PC-9 (cell line): ENCODE measurements at regions of chr6 and their contacts with region 1.

Region 1: GRCh38 chr6:11036977-11037430 is 7.1 kb downstream of the ELOVL2 start:
- DNase-seq: no peak
- H3K4me3 ChIP-seq: no peak overlapping the region
- H3K27ac ChIP-seq: no peak overlapping the region
- H3K4me1 ChIP-seq: no peaks in the 10 kb centered on the region
- H3K27me3 ChIP-seq: no peaks in the 10 kb centered on the region
- CTCF ChIP-seq: no peak

Region 2: GRCh38 chr6:11050731-11051130 is 13.7 kb after region 1 on chr6:
- CTCF ChIA-PET with region 1: no interaction called
- POLR2A ChIA-PET with region 1: interaction called, 11 read pairs
- intact Hi-C with region 1: no loop called
- DNase-seq: peak in 1 of 2 experiments; percentile 36
- H3K4me3 ChIP-seq: no peak overlapping the region
- H3K27ac ChIP-seq: no peak overlapping the region
- H3K4me1 ChIP-seq: peaks cover 7% of the 10 kb centered on the region
- H3K27me3 ChIP-seq: no peaks in the 10 kb centered on the region
- CTCF ChIP-seq: no peak

Region 3: DNA sequence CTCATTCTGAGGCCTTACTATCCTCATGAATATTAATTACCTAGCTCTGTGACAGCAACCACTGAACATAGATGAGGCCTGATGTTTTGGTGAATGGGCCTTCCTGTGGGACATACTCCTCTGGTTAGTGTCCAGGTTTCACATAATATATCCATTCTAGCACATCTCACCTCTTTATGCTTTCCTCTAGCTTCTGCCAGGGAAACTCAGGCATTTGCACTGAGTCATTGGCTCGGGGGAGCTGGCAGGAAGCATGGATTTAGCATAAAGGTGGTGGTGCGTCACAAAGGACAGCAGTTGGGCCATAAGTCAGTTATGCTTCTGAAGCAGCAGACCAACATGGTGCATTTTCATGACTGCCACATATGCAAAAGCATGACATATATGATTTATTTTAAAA is 463.0 kb after region 1 on chr6:
- CTCF ChIA-PET with region 1: no interaction called
- POLR2A ChIA-PET with region 1: no interaction called
- intact Hi-C with region 1: no loop called
- DNase-seq: no peak
- H3K4me3 ChIP-seq: no peak overlapping the region
- H3K27ac ChIP-seq: no peak overlapping the region
- H3K4me1 ChIP-seq: peaks cover 11% of the 10 kb centered on the region
- H3K27me3 ChIP-seq: no peaks in the 10 kb centered on the region
- CTCF ChIP-seq: no peak